GM10248 (cell line): ENCODE measurements at regions of chr18 and their contacts with region 1.

Region 1: GRCh38 chr18:58117786-58118403 is 73.9 kb downstream of the NEDD4L start:
- DNase-seq: no peak
- CTCF ChIP-seq: no peak

Region 2: GRCh38 chr18:57881818-57882413 is 236.0 kb before region 1 on chr18:
- CTCF ChIA-PET with region 1: interaction called, 29 read pairs
- POLR2A ChIA-PET with region 1: no interaction called
- DNase-seq: peak; percentile 62
- CTCF ChIP-seq: peak; percentile 86

Region 3: DNA sequence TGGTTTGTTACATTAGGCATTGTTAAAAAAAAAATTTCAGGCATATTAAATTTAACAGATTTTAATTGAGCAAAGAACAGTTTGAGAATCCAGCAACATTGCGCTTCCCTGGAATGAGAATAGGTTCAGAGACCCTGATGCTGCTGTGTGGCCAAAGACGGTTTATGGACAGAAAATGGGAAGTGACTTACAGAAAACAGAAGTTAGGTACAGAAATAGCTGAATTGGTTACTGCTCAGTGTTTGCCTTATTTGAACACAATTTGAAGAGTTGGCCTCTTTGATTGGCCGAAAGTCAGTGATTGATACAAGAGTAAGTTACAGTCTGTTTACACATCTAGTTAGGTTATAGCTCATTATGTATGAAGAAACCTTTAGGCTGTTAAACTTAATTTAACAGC is 79.8 kb before region 1 on chr18:
- CTCF ChIA-PET with region 1: interaction called, 30 read pairs
- POLR2A ChIA-PET with region 1: no interaction called
- DNase-seq: no peak
- CTCF ChIP-seq: no peak

Region 4: GRCh38 chr18:58051765-58052460 is 66.0 kb before region 1 on chr18:
- CTCF ChIA-PET with region 1: interaction called, 19 read pairs
- POLR2A ChIA-PET with region 1: no interaction called
- DNase-seq: peak; percentile 46
- CTCF ChIP-seq: peak; percentile 40

Region 5: DNA sequence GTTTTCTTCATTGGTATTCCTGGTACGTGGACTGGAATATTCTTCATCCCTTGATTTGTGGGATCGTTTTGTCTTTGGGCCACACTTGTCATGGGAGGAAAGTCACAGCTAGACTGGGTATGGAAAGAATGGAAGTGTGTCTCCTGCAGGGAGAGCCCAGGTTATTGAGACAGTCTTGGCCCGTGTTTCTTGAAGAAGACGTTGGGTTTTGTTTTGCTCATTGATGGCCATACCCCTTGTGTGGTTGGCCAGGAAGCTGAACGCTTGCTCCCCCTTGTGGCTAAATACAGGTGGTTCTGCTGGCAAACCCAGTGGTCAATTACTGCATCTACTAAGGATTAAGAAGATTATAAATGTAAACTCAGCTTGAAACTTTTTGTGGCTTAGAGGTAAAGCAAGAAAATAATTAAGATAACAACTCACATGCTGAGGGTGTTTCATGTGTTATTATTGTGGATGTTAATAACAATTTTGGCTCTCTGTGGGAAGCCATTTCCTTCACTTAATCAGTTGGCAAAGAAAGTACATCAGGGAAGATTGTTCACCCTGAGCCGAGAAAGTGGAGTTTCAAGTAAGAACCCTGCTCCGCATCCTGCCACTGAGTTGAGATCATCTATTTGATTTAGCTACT is 17.9 kb after region 1 on chr18:
- CTCF ChIA-PET with region 1: interaction called, 16 read pairs
- POLR2A ChIA-PET with region 1: no interaction called
- DNase-seq: peak; percentile 79
- CTCF ChIP-seq: peak; percentile 85